ENCODE measurements at regions of chr16 and their contacts with region 1.

Region 1: DNA sequence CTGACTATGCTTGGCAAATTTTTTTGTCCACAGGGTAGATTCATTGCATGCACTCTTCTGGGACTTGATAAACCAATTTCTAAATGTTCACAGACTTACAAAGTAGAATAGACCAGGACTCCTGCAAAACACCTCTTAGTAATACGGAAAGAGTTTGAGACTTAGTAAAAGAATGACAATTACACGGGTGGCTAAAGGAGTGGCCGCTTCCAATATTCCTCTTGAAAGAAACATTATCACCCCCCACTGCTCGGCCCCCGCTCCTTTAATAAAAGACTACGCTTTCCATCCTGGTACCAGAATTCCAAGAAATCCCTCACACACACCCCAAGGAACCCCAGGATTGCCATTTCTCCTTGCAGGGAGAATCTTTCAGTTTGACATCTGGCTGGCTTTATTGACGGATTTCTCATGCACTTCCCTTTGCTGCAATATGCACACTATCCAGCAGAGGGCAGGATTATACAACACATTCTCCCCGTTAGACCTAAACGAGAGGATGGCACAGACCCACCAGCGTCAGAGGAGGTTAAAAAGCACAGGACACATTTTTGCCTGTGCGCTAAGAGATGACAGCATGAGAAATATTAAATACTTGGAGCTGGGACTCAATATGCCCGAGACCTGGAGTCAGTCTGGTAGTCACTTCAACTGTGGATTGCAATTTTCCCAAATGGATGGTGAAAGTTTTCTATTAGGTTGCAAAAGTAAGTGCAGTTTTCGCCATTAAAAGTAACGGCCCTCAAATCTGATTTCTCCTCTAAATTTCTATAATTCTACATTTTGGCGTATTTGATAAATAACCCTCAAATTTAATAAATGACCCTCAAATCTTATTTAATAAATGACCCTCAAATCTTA is 46.6 kb upstream of the NUDT7 start:
- DNase-seq: peak in 1 of 2 donors; percentile 71
- ATAC-seq: peak; percentile 71 to 91 (median 78)
- H3K4me3 ChIP-seq: no peak overlapping the region
- H3K27ac ChIP-seq: no peak overlapping the region
- H3K4me1 ChIP-seq: no peaks in the 10 kb centered on the region
- H3K27me3 ChIP-seq: peaks cover 0 to 11% (median 0%) of the 10 kb centered on the region in 7 donors
- CTCF ChIP-seq: peak; percentile 71 to 93 (median 87)

Region 2: DNA sequence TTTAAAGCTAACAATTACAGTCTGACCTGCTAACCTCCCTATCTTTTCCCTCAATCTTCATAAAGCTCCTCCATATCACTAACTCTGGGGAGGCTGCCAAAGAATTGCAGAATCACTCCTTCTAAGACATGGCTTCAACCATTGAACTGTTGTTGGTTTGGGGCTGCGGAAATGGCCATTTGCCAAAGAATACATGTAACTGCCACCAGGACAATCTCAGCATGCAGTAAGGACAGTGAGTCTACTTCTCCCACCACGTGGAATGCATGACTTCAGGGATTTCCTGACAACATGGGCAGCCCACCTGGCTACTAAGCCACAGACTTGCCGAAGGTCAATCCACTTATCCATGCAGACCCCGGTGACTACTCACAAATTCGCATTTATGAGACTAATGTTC is 57.7 kb before region 1 on chr16:
- intact Hi-C with region 1: no loop called
- DNase-seq: no peak
- ATAC-seq: no peak
- H3K4me3 ChIP-seq: no peak overlapping the region
- H3K27ac ChIP-seq: no peak overlapping the region
- H3K4me1 ChIP-seq: no peaks in the 10 kb centered on the region
- H3K27me3 ChIP-seq: no peaks in the 10 kb centered on the region
- CTCF ChIP-seq: no peak

Region 3: DNA sequence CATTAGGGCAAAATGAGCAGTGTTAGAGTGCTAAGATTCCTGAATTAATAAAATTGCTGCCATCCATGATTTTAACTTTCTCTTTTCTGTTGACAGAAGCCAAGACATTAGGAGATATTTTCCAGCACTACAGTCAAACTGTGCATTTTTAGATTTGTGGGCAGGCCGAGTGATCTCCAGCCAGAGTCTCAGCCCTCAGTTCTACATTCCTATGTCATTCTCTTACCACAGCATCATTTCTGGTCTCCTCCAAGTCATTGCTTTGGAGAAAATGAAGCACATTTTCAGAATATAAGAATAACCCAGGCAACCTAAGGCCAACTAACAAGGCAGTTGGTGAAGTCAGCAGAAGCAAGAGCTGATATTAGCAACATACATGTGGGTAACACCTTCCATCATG is 28.0 kb before region 1 on chr16:
- intact Hi-C with region 1: no loop called
- DNase-seq: no peak
- ATAC-seq: no peak
- H3K4me3 ChIP-seq: no peak overlapping the region
- H3K27ac ChIP-seq: no peak overlapping the region
- H3K4me1 ChIP-seq: no peaks in the 10 kb centered on the region
- H3K27me3 ChIP-seq: peaks cover 0 to 18% (median 6%) of the 10 kb centered on the region in 7 donors
- CTCF ChIP-seq: no peak

Region 4: GRCh38 chr16:77788181-77789084 is 112.7 kb after region 1 on chr16 and contains the start of gene VAT1L:
- intact Hi-C with region 1: loop called in 1 of 10 experiments (anchors 10 kb)
- DNase-seq: peak; percentile 23 to 30
- ATAC-seq: peak; percentile 81 to 93 (median 88)
- H3K4me3 ChIP-seq: peak within 1 kb of the TSS; percentile 45 to 70 (median 64)
- H3K27ac ChIP-seq: no peak within 1 kb of the TSS
- H3K4me1 ChIP-seq: peaks cover 0 to 20% (median 8%) of the 10 kb centered on the region in 9 donors
- H3K27me3 ChIP-seq: peaks cover 4 to 70% (median 49%) of the 10 kb centered on the region in 7 donors
- CTCF ChIP-seq: no peak
- total RNA-seq, gene VAT1L: 7.3 to 61.0 (median 28.0) TPM

Region 5: GRCh38 chr16:77971306-77972271 is 295.9 kb after region 1 on chr16:
- intact Hi-C with region 1: loop called (anchors 1 to 5 kb)
- DNase-seq: peak; percentile 80 to 83
- ATAC-seq: peak; percentile 81 to 92 (median 86)
- H3K4me3 ChIP-seq: no peak overlapping the region
- H3K27ac ChIP-seq: no peak overlapping the region
- H3K4me1 ChIP-seq: no peaks in the 10 kb centered on the region
- H3K27me3 ChIP-seq: peaks cover 0 to 11% (median 0%) of the 10 kb centered on the region in 7 donors
- CTCF ChIP-seq: peak; percentile 71 to 87 (median 82)

Region 6: GRCh38 chr16:78002915-78003538 is 327.3 kb after region 1 on chr16:
- intact Hi-C with region 1: loop called in 5 of 10 experiments (anchors 1 to 10 kb)
- DNase-seq: peak; percentile 78 to 82
- ATAC-seq: peak; percentile 87 to 95 (median 92)
- H3K4me3 ChIP-seq: no peak overlapping the region
- H3K27ac ChIP-seq: no peak overlapping the region
- H3K4me1 ChIP-seq: no peaks in the 10 kb centered on the region
- H3K27me3 ChIP-seq: peaks cover 0 to 16% (median 0%) of the 10 kb centered on the region in 7 donors
- CTCF ChIP-seq: peak; percentile 77 to 84 (median 83)

Region 7: GRCh38 chr16:78094176-78094575 is 418.5 kb after region 1 on chr16:
- intact Hi-C with region 1: loop called in 6 of 10 experiments (anchors 2 to 10 kb)
- DNase-seq: no peak
- ATAC-seq: no peak
- H3K4me3 ChIP-seq: no peak overlapping the region
- H3K27ac ChIP-seq: no peak overlapping the region
- H3K4me1 ChIP-seq: peaks cover 0 to 6% (median 0%) of the 10 kb centered on the region in 9 donors
- H3K27me3 ChIP-seq: peaks cover 0 to 28% (median 9%) of the 10 kb centered on the region in 7 donors
- CTCF ChIP-seq: peak in 1 of 9 donors; percentile 15

Region 8: DNA sequence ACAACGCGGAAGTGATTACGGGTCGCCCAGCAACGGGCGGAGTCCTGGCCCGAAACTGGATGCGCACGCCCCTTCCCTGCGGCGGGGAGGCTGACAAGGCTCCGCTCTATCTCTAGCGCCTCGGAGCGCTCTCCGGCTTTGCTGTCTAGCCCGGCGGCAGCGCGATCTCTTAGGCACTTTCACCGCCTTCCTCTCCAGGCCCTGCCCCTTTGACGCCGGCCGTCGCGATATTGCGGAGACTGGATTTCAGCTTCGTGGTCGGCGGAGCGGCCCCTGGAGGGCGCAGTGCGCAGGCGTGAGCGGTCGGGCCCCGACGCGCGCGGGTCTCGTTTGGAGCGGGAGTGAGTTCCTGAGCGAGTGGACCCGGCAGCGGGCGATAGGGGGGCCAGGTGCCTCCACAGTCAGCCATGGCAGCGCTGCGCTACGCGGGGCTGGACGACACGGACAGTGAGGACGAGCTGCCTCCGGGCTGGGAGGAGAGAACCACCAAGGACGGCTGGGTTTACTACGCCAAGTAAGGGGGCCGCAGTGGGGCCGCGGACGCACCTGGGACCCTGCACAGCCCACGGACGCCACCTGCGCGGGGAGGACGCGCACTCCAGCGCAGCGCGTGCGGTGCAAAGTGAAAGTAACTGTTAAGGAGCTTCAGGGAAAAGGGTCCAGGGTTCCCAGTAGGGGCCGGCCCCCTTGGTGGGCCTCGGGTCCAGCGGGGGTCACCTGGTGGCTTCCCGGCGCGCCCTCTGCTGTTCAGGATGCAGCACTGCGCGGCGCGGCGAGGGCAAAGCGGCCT is 423.9 kb after region 1 on chr16 and contains the start of gene WWOX:
- intact Hi-C with region 1: loop called in 7 of 10 experiments (anchors 2 to 10 kb)
- DNase-seq: peak; percentile 95 to 96
- ATAC-seq: peak; percentile 97 to 99 (median 98)
- H3K4me3 ChIP-seq: peak within 1 kb of the TSS; percentile 69 to 100 (median 82)
- H3K27ac ChIP-seq: peak within 1 kb of the TSS; percentile 14 to 92 (median 88)
- H3K4me1 ChIP-seq: peaks cover 3 to 15% (median 8%) of the 10 kb centered on the region in 9 donors
- H3K27me3 ChIP-seq: peaks cover 0 to 8% (median 0%) of the 10 kb centered on the region in 7 donors
- CTCF ChIP-seq: peak; percentile 57 to 89 (median 82)
- total RNA-seq, gene WWOX: 6.1 to 15.0 (median 10.3) TPM

Measured in heart right ventricle (tissue), 16 donors.